ENCODE measurements at regions of chr19 and their contacts with region 1.

Region 1: DNA sequence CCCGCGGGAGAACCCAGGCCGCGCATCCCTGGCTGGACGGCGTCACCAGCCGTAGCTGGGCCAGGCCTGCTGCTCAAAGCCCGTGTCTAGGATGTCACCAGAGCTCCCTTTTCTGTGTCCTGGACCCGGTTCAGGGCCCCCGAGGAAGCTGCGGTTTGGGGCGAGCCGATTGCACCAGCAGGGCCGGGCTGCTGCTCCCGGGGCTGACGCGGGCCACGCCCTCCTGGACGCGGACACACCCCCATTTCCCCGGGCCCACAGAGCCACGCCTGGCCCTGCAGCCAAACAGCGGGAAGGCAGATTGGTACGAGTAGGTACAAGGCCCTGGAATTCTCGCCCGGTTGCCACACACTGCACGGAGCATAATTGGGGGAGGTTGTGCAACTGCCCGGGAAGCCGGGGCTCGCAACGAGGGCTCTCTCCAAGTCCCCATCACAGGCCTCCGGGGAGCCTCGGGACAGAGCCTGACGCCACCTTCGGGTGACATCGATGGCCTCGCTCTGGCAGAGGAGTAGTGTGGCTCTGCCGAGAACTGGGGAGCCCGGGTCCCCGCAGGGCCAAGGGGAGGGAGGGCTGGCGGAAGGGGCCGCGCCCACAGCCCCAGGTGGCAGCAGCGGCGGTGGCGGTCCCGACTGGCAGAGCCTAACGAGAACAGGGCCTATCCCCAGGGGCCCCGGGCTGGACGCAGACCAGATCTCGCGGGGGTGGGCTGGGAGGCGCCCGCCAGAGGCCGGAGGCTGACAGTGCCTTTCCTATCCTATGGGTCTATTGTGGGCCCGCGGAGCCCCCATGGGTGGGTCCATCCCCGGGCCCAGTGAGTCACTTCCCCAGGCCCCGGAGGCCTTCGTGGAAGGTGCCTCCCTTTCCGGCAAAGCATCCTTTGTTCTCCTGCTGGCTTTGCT is 23.5 kb downstream of the KCTD15 start:
- H3K4me3 Mint-ChIP-seq: peak overlapping the region; percentile 74
- H3K27ac Mint-ChIP-seq: peak overlapping the region; percentile 83
- H3K4me1 Mint-ChIP-seq: peaks cover 56% of the 10 kb centered on the region
- H3K27me3 Mint-ChIP-seq: no peaks in the 10 kb centered on the region

Region 2: DNA sequence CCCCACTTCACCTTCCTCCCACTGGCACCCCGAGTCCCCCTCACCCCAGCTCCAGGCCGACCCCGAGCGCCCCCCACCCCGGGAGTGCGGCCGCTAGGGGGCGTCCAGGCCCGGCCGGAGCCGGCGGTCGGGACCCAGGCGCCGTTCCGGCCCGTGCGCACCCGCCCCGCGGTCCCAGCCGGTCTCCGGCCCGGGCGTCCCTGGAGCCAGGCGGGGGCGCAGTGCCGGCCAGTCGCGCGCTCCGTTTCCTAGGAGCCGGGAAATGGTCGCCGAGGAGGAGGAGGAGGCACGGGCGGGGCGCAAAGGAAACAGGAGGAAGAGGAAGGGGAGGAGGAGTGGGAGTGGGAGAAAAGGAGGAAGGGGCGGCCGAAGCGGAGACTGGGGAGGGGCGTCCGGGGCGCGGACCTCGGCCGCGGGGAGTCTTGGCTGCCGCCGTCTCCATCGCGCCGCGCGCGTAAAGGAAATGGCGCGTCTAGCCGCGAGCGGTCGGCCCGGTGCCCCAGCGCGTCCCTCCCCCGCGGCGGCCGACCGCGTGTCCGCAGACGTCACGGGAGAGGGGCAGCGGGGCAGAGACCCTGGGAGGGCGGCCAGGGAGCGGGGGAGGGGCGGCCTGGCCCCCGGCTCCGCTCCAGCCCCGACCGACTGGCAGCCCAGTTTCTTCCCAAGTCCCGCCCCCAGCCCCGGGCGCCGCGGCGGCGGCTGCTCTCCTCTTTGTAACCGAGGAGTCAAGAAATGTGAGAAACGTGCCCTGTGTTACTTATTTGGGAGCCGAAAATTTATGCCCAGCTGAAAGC is 24.6 kb before region 1 on chr19:
- intact Hi-C with region 1: loop called (anchors 1 kb)
- H3K4me3 Mint-ChIP-seq: peak overlapping the region; percentile 90
- H3K27ac Mint-ChIP-seq: peak overlapping the region; percentile 89
- H3K4me1 Mint-ChIP-seq: peaks cover 11% of the 10 kb centered on the region
- H3K27me3 Mint-ChIP-seq: peaks cover 10% of the 10 kb centered on the region

Region 3: DNA sequence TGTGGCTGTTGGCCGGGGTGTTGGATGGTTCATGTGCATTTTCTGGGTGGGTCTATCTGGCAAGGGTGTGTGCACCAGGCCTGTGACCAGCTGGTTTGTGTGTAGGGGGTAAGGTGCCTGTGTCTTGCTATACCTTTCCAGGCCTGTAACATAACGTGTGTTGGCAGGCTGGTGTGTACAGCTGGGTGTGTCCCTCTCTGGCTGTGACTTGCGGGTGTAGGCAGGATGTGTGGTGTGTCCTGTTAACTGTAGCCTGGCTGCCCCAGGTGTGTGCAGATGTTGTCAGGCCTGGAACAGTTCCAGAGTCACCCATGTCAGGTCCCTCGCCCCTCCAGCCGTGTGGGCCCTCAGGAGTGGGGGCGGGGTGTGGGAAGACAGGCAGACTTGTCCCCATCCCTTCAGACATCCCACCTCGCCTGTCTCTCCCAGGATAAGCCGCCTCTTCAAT is 13.7 kb before region 1 on chr19:
- intact Hi-C with region 1: no loop called
- H3K4me3 Mint-ChIP-seq: no peak overlapping the region
- H3K27ac Mint-ChIP-seq: no peak overlapping the region
- H3K4me1 Mint-ChIP-seq: peaks cover 5% of the 10 kb centered on the region
- H3K27me3 Mint-ChIP-seq: no peaks in the 10 kb centered on the region

Region 4: GRCh38 chr19:33868788-33869412 is 48.8 kb after region 1 on chr19:
- intact Hi-C with region 1: no loop called
- H3K4me3 Mint-ChIP-seq: no peak overlapping the region
- H3K27ac Mint-ChIP-seq: no peak overlapping the region
- H3K4me1 Mint-ChIP-seq: peaks cover 5% of the 10 kb centered on the region
- H3K27me3 Mint-ChIP-seq: peaks cover 24% of the 10 kb centered on the region

Region 5: GRCh38 chr19:33905937-33906576 is 85.9 kb after region 1 on chr19:
- intact Hi-C with region 1: no loop called
- H3K4me3 Mint-ChIP-seq: peak overlapping the region; percentile 57
- H3K27ac Mint-ChIP-seq: no peak overlapping the region
- H3K4me1 Mint-ChIP-seq: peaks cover 6% of the 10 kb centered on the region
- H3K27me3 Mint-ChIP-seq: peaks cover 70% of the 10 kb centered on the region

Measured in dendritic cell treated with granulocyte-macrophage colony-stimulating factor and Interleukin-4, amounts not matched to agents 40 ng/mL and 50 ng/mL, for 4 days (primary cell).